ENCODE measurements at regions of chr1 and their contacts with region 1.

Region 1: DNA sequence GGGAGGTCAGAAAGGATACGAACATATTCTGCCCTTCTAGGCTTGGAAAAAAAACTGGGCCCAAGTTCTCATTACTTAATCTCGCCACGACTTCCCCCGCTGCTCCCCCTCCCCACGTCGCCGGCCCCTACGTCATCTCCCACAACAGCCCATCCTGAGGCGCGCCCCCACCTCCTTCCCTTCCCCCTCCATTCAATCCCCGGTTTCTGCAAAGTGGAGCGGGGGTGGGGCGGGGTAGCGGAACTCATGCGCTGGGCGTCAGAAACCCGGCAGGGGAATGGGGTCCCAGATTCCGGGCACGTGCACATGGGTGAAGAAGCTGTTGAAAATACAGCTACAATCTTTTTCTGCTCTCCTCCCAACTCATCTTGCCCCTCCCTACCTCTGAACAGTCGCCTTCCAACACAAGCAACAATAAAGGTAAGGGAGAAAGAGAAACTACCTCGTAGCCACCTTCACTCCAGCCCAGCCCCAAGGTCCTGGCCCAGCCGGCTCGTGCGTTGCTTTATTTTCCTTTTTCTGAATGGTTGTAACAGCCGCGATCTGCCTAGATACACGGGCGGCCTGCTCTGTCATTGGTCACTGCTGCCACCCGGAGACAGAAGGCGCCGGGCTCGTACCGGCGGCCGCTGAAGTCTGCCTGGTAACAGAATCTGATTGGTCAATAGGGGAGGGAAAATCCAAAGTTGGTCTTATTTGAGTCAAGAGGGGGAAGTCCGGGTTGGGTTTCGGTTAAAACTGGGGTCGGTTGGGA is at the start of gene RFX5:
- DNase-seq: peak; percentile 94 to 96 (median 95)
- ATAC-seq: peak; percentile 98 to 99 (median 99)
- H3K4me3 ChIP-seq: peak within 1 kb of the TSS; percentile 55 to 95 (median 76)
- H3K27ac ChIP-seq: peak within 1 kb of the TSS; percentile 79 to 96 (median 90)
- H3K4me1 ChIP-seq: peaks cover 0 to 26% (median 9%) of the 10 kb centered on the region in 12 donors
- H3K27me3 ChIP-seq: no peaks in the 10 kb centered on the region
- CTCF ChIP-seq: peak in 1 of 12 donors; percentile 16
- POLR2A ChIP-seq: peak in 1 of 2 donors; percentile 63
- total RNA-seq, gene RFX5: 14.0 to 49.3 (median 22.1) TPM

Region 2: DNA sequence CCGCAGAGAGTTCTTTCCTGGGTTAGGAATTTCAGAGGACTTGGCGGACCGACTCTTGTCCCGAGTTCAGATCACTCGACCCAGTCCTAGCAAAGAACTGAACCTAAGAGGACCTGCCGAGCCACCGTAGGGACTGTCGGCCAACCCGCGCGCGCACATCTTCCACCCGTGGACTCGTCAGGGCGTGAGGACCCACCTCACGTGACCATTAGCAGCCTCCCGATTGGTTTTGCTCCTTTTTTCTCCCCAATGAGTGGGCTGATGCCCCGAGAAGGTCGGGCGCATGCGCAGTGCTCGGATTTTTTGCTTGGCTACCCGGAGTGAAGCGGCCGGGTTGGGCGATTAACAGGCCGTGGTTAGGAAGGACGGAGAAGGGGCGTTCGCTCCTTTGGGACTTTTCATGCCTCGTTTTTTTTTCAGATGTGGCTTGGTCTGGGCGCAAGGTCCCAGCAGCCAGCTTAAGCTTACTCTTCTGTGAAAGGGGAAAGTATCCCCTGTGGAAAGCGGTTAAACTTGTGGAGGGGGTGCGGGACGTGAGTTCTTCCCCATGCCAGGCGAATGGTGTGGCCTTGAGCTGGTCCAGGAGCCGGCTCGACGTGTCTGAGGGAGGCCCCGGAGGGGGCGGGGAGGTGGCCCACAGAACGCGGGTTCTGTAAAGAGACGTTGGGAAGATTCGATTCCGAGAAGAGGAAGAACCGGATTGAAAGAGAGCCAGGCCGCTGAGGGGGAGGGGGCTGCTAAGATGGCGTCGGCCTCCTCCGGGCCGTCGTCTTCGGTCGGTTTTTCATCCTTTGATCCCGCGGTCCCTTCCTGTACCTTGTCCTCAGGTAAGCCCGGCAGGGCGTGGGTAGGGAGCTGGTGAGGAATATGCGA is 148.5 kb before region 1 on chr1 and contains the start of gene PIP5K1A:
- intact Hi-C with region 1: loop called in 5 of 10 experiments (anchors 5 to 10 kb)
- DNase-seq: peak; percentile 99 to 100 (median 99)
- ATAC-seq: peak; percentile 94 to 97 (median 96)
- H3K4me3 ChIP-seq: peak within 1 kb of the TSS; percentile 58 to 90 (median 78)
- H3K27ac ChIP-seq: peak within 1 kb of the TSS; percentile 33 to 94 (median 90)
- H3K4me1 ChIP-seq: peaks cover 0 to 49% (median 36%) of the 10 kb centered on the region in 12 donors
- H3K27me3 ChIP-seq: no peaks in the 10 kb centered on the region
- CTCF ChIP-seq: no peak
- POLR2A ChIP-seq: peak in 1 of 2 donors; percentile 68
- total RNA-seq, gene PIP5K1A: 28.1 to 48.8 (median 37.0) TPM

Region 3: GRCh38 chr1:151281969-151282882 is 64.7 kb before region 1 on chr1 and contains the start of gene ZNF687:
- intact Hi-C with region 1: loop called in 1 of 10 experiments (anchors 5 kb)
- DNase-seq: peak; percentile 100
- ATAC-seq: peak; percentile 91 to 98 (median 94)
- H3K4me3 ChIP-seq: peak within 1 kb of the TSS; percentile 71 to 98 (median 90)
- H3K27ac ChIP-seq: peak within 1 kb of the TSS; percentile 92 to 100 (median 98)
- H3K4me1 ChIP-seq: peaks cover 0 to 37% (median 14%) of the 10 kb centered on the region in 12 donors
- H3K27me3 ChIP-seq: no peaks in the 10 kb centered on the region
- CTCF ChIP-seq: no peak
- POLR2A ChIP-seq: peak in 1 of 2 donors; percentile 78
- total RNA-seq, gene ZNF687: 10.9 to 30.3 (median 14.3) TPM

Region 4: GRCh38 chr1:151372061-151372934 is 25.4 kb after region 1 on chr1 and contains the start of gene SELENBP1:
- intact Hi-C with region 1: no loop called
- DNase-seq: peak; percentile 79 to 95 (median 90)
- ATAC-seq: peak; percentile 86 to 91 (median 86)
- H3K4me3 ChIP-seq: peak within 1 kb of the TSS; percentile 2 to 74 (median 52)
- H3K27ac ChIP-seq: peak within 1 kb of the TSS; percentile 66 to 89 (median 84)
- H3K4me1 ChIP-seq: peaks cover 4 to 58% (median 48%) of the 10 kb centered on the region in 12 donors
- H3K27me3 ChIP-seq: no peaks in the 10 kb centered on the region
- CTCF ChIP-seq: no peak
- POLR2A ChIP-seq: peak in 1 of 2 donors; percentile 85
- total RNA-seq, gene SELENBP1: 27.6 to 97.8 (median 48.7) TPM

Measured in heart left ventricle (tissue), 16 donors.